ENCODE measurements at regions of chr6 and their contacts with region 1.

Region 1: GRCh38 chr6:153767127-153767526 is 271.9 kb upstream of the OPRM1 start:
- DNase-seq: no peak
- H3K4me3 ChIP-seq: no peak overlapping the region
- H3K27ac ChIP-seq: no peak overlapping the region
- H3K4me1 ChIP-seq: no peaks in the 10 kb centered on the region
- CTCF ChIP-seq: no peak

Region 2: GRCh38 chr6:153735761-153736160 is 31.4 kb before region 1 on chr6:
- CTCF ChIA-PET with region 1: no interaction called
- POLR2A ChIA-PET with region 1: no interaction called
- intact Hi-C with region 1: loop called (anchors 1 kb)
- DNase-seq: no peak
- H3K4me3 ChIP-seq: no peak overlapping the region
- H3K27ac ChIP-seq: no peak overlapping the region
- H3K4me1 ChIP-seq: no peaks in the 10 kb centered on the region
- CTCF ChIP-seq: no peak